Caco-2 (cell line): ENCODE measurements at regions of chr6 and their contacts with region 1.

Region 1: GRCh38 chr6:105431226-105431625 is 28.3 kb upstream of the PREP start:
- DNase-seq: peak in 1 of 2 experiments; percentile 46
- H3K4me3 ChIP-seq: no peak overlapping the region
- H3K4me3 Mint-ChIP-seq: no peak overlapping the region
- H3K27ac Mint-ChIP-seq: no peak overlapping the region
- H3K4me1 ChIP-seq: peaks cover 28% of the 10 kb centered on the region
- H3K4me1 Mint-ChIP-seq: peaks cover 19% of the 10 kb centered on the region
- H3K27me3 ChIP-seq: no peaks in the 10 kb centered on the region
- H3K27me3 Mint-ChIP-seq: no peaks in the 10 kb centered on the region
- CTCF ChIP-seq: peak; percentile 45 to 73

Region 2: DNA sequence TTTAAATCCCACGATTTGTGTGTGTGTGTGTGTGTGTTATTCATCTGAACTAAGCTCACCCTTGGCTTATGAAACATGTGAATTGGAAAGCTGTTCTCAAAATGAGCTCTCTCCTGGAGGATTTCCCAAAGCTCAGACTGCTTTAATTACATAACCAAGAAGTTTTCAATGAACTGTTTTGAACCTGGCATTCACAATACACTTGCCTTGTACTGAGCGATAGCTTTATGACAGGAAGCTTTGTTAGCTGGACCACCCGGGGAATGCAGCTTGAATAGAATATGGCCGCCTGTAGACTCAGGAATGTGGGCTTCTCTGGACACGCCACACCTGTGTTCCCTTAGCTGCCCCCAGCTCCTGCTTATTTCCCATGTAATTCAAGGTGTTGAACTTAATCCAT is 43.0 kb after region 1 on chr6:
- CTCF ChIA-PET with region 1: no interaction called
- POLR2A ChIA-PET with region 1: no interaction called
- intact Hi-C with region 1: loop called (anchors 5 kb)
- DNase-seq: no peak
- H3K4me3 ChIP-seq: no peak overlapping the region
- H3K4me3 Mint-ChIP-seq: no peak overlapping the region
- H3K27ac Mint-ChIP-seq: no peak overlapping the region
- H3K4me1 ChIP-seq: peaks cover 4% of the 10 kb centered on the region; the same call in 1 of the 2 replicates
- H3K4me1 Mint-ChIP-seq: peaks cover 7% of the 10 kb centered on the region
- H3K27me3 ChIP-seq: no peaks in the 10 kb centered on the region
- H3K27me3 Mint-ChIP-seq: no peaks in the 10 kb centered on the region
- CTCF ChIP-seq: no peak

Region 3: GRCh38 chr6:106223300-106223930 is 792.2 kb after region 1 on chr6:
- CTCF ChIA-PET with region 1: interaction called, 7 read pairs
- POLR2A ChIA-PET with region 1: no interaction called
- intact Hi-C with region 1: loop called (anchors 2 kb)
- DNase-seq: peak; percentile 54 to 65
- H3K4me3 ChIP-seq: no peak overlapping the region
- H3K4me3 Mint-ChIP-seq: no peak overlapping the region
- H3K27ac Mint-ChIP-seq: no peak overlapping the region
- H3K4me1 ChIP-seq: peaks cover 6% of the 10 kb centered on the region; the same call in 1 of the 2 replicates
- H3K4me1 Mint-ChIP-seq: peaks cover 21% of the 10 kb centered on the region
- H3K27me3 ChIP-seq: no peaks in the 10 kb centered on the region
- H3K27me3 Mint-ChIP-seq: no peaks in the 10 kb centered on the region
- CTCF ChIP-seq: peak; percentile 52 to 56

Region 4: GRCh38 chr6:106300944-106301343 is 869.7 kb after region 1 on chr6:
- CTCF ChIA-PET with region 1: no interaction called
- POLR2A ChIA-PET with region 1: interaction called, 3 read pairs
- intact Hi-C with region 1: loop called (anchors 2 kb)
- DNase-seq: peak in 1 of 2 experiments; percentile 24
- H3K4me3 ChIP-seq: no peak overlapping the region
- H3K4me3 Mint-ChIP-seq: no peak overlapping the region
- H3K27ac Mint-ChIP-seq: no peak overlapping the region
- H3K4me1 ChIP-seq: no peaks in the 10 kb centered on the region
- H3K4me1 Mint-ChIP-seq: no peaks in the 10 kb centered on the region
- H3K27me3 ChIP-seq: no peaks in the 10 kb centered on the region
- H3K27me3 Mint-ChIP-seq: no peaks in the 10 kb centered on the region
- CTCF ChIP-seq: peak; percentile 10 to 48